ENCODE measurements at regions of chr12 and their contacts with region 1.

Region 1: DNA sequence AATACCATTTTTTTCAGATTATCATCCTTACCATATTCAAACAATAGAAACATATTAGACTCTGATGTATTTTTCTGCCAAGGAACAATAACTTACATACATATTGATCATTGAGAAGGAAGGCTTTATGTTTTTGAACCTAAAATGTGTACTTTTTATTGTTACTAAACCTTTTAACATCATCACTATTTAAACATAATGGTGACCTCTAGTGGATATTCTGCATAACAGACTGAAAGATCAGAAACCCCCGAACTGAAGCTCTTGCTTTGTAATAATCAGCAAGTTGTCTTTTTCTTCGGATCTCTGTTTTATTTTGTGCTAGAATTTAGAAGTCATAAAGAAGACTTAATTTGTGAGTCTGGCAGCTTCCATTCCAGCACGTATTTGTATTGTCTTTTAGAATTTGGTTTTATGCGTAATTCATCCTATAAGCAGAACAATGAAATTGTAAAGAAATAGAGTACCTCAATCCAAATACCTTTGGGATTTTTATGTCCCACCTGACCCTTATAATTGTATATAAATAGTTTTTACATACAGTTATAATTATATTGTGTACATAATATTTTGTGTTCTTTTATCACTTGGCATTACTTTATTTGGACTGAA is 125.9 kb upstream of the ATF1 start:
- DNase-seq: no peak
- H3K4me3 ChIP-seq: no peak overlapping the region
- H3K27ac ChIP-seq: peak overlapping the region in 1 of 2 donors; percentile 30
- H3K4me1 ChIP-seq: peaks cover 1% of the 10 kb centered on the region
- H3K27me3 ChIP-seq: no peaks in the 10 kb centered on the region
- CTCF ChIP-seq: peak; percentile 37 to 77 (median 68)
- EP300 ChIP-seq: no peak
- POLR2A ChIP-seq: no peak

Region 2: DNA sequence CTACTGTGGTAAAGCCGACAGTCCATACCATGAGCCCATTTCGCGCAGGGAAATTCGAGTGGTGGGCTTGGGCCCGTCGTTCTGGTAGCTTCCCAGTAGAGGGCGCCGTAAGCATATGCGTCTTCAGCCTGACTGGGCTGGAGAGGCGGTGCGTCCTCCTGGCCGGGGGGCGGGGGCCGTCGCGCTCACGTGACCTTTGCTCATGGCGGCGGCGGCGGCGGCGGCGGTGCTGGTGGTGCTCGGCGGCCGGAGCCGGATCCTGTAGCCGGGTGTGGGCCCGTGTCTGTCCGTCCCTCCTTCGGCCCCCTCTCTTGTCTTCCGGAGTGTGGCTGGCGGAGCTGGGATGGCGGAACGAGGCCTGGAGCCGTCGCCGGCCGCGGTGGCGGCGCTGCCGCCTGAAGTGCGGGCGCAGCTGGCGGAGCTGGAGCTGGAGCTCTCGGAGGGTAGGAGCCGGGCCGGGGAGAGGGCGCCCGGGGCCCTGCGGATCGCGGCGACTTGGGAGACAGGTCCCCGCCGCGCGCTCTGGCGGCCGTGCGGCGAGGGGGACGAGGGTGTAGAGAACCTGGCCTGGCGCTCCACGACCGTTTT is 133.1 kb before region 1 on chr12 and contains the start of gene DIP2B:
- intact Hi-C with region 1: loop called (anchors 2 to 5 kb)
- DNase-seq: peak; percentile 93 to 97 (median 95)
- H3K4me3 ChIP-seq: peak within 1 kb of the TSS; percentile 55
- H3K27ac ChIP-seq: peak within 1 kb of the TSS; percentile 86 to 91
- H3K4me1 ChIP-seq: peaks cover 4% of the 10 kb centered on the region
- H3K27me3 ChIP-seq: no peaks in the 10 kb centered on the region
- CTCF ChIP-seq: peak; percentile 93 to 98 (median 97)
- EP300 ChIP-seq: no peak
- POLR2A ChIP-seq: peak; percentile 16
- total RNA-seq, gene DIP2B: 16.4 to 33.3 (median 20.0) TPM

Region 3: DNA sequence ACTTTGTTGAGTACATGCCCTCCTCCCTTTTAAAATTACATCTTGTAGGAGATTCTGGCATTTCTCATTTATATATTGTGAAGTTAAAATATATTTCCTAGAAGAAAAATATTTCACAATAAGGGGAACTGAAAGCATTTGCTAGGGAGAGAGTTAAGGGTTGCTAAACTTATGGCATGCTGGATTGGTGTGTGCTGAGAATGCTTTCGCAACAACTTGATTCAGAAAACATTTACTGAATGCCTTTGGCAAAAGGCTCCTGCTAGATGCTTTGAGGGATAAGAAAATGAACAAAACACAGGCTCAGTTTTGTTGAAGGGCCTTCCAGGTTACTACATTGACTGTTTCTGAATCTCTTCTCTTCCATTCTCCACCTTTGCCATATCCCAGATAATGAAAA is 65.7 kb before region 1 on chr12:
- intact Hi-C with region 1: loop called in 1 of 4 experiments (anchors 10 kb)
- DNase-seq: no peak
- H3K4me3 ChIP-seq: no peak overlapping the region
- H3K27ac ChIP-seq: peak overlapping the region in 1 of 2 donors; percentile 47
- H3K4me1 ChIP-seq: peaks cover 29% of the 10 kb centered on the region
- H3K27me3 ChIP-seq: no peaks in the 10 kb centered on the region
- CTCF ChIP-seq: no peak
- EP300 ChIP-seq: no peak
- POLR2A ChIP-seq: no peak

Region 4: GRCh38 chr12:50597200-50598195 is 40.5 kb before region 1 on chr12:
- intact Hi-C with region 1: no loop called
- DNase-seq: no peak
- H3K4me3 ChIP-seq: no peak overlapping the region
- H3K27ac ChIP-seq: no peak overlapping the region
- H3K4me1 ChIP-seq: peaks cover 6% of the 10 kb centered on the region
- H3K27me3 ChIP-seq: no peaks in the 10 kb centered on the region
- CTCF ChIP-seq: no peak
- EP300 ChIP-seq: no peak
- POLR2A ChIP-seq: no peak

Measured in ovary (tissue), 10 donors.